Activated CD8-positive, alpha-beta T cell treated with anti-CD3 and anti-CD28 coated beads for 36 hours (primary cell): ENCODE measurements at regions of chr16 and their contacts with region 1.

Region 1: DNA sequence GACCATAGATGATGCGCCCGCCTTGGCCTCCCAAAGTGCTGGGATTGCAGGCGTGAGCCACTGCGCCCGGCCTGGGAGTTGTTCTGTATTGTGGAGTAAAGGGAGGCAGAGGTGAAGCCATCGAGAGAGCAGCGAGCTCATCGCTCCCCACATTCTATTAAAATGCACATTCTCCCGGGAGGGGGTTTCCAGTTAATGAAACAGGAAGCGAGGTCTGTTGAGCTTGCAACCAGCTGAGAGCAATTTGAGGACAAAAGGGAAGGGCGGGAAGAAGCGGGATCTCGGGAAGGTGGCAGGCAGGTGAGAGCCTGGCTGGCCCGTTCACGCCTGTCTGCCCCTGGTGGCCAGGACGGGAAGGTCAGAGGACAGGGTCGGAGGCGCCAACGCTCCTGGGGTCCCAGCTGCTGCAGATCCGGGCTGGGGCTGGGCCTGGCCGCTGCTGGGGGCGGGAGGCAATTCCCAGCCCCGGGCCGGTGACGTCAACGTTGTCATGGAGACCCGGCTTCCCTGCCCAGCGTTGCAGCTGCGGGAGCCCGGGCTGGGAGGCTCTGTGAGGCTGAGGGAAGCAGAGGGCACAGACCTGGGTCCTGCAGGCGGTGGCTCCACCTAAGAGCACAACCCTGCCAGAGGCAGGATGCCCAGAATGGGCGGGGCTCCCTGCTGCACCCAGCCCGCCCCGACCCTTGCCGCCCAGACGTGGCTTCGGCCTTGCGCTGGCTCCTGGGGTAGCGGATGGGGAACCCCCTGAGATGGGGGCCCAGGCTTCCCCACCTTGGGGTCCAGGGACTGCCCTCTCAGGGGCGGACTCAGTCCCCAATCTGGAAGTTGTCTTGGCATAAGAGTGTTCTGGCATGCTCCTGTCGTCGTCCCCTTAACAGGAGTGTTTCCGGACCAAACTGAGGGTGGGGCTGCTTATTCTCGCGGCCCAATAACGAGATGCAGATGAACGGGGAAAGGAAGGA is 48.7 kb upstream of the PLCG2 start:
- DNase-seq: peak; percentile 67
- ATAC-seq: peak; percentile 93
- H3K4me3 Mint-ChIP-seq: peak overlapping the region; percentile 68
- H3K27ac Mint-ChIP-seq: peak overlapping the region; percentile 91
- H3K4me1 Mint-ChIP-seq: peaks cover 12% of the 10 kb centered on the region
- H3K27me3 Mint-ChIP-seq: no peaks in the 10 kb centered on the region
- CTCF ChIP-seq: peak; percentile 69

Region 2: GRCh38 chr16:81366316-81366932 is 363.9 kb before region 1 on chr16:
- CTCF ChIA-PET with region 1: interaction called, 44 read pairs
- POLR2A ChIA-PET with region 1: no interaction called
- intact Hi-C with region 1: loop called (anchors 10 kb)
- DNase-seq: peak; percentile 10
- ATAC-seq: peak; percentile 67
- H3K4me3 Mint-ChIP-seq: no peak overlapping the region
- H3K27ac Mint-ChIP-seq: no peak overlapping the region
- H3K4me1 Mint-ChIP-seq: no peaks in the 10 kb centered on the region
- H3K27me3 Mint-ChIP-seq: no peaks in the 10 kb centered on the region
- CTCF ChIP-seq: peak; percentile 80

Region 3: DNA sequence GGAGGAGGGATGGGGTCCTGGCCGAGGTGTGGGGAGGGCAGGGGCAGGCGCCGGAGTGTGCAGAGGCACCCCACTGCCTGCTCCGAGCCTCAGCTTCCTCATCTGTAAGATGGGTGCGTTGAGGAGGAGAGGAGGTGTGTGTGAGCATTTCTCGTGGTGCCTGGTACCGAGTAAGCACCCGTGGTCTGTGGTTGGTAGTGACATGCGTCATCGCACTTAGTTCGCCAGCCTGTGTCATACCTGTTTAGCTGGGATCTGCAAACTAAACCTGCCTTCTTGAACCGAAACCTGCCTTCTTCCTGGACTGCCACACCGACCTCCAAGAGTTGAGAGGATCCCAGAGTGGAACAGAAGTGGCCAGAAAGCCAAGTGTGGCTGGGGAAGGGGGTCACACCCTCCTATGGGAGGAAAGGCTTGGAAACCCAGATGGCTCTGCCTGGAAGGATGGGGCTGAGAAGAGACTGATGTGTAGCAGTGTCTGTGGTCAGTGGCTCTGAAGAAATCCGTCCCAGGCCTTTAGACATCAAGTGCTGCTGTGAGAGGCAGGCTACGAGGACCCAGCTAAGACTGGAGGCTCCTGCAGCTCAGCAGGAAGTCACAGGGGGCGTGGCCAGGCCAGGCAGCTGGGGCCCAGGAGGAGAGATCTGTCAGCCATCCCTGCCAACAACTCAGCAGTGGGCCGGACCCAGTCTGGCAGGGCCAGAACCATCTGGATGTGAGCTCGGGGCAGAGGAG is 113.9 kb before region 1 on chr16:
- CTCF ChIA-PET with region 1: interaction called, 26 read pairs
- POLR2A ChIA-PET with region 1: no interaction called
- intact Hi-C with region 1: no loop called
- DNase-seq: peak; percentile 91
- ATAC-seq: peak; percentile 95
- H3K4me3 Mint-ChIP-seq: peak overlapping the region; percentile 42
- H3K27ac Mint-ChIP-seq: peak overlapping the region; percentile 90
- H3K4me1 Mint-ChIP-seq: peaks cover 13% of the 10 kb centered on the region
- H3K27me3 Mint-ChIP-seq: no peaks in the 10 kb centered on the region
- CTCF ChIP-seq: no peak

Region 4: DNA sequence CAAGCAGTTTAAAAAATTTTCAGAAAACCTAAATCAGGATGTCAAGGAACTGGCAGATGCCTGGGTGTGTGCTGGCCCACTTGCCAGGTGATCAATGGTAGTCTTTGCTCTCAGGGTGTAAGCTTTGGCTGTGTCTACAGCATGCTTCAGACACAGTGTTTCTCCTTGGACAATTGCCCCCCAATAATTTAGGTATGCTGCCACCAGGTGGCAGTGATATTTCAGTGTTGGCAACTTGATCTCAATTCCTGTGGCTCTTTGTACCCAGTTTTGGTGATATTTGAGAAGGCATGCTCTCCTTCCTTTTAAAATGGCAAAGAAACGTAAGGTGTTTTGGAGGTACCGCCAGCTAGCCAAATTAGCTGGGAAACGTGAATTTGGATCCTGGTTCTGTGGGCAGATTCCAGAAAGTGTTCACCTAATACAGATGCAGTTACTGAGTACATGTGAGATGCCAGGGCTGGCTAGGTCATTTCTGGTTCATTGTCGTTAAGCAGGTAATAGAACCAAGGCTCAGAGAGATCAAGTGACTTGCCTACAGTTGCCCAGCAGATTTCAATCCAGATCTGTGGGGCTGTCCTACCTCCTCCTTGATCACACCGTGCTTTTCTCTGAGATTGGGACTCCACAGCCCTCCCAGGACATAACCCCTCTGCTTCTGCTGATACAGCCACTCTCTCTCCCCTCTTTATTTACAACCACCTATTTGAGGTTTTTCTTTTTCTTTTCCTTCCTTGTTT is 106.8 kb before region 1 on chr16:
- CTCF ChIA-PET with region 1: interaction called, 26 read pairs
- POLR2A ChIA-PET with region 1: no interaction called
- intact Hi-C with region 1: no loop called
- DNase-seq: peak; percentile 74
- ATAC-seq: no peak
- H3K4me3 Mint-ChIP-seq: no peak overlapping the region
- H3K27ac Mint-ChIP-seq: no peak overlapping the region
- H3K4me1 Mint-ChIP-seq: peaks cover 5% of the 10 kb centered on the region
- H3K27me3 Mint-ChIP-seq: no peaks in the 10 kb centered on the region
- CTCF ChIP-seq: peak; percentile 69

Region 5: GRCh38 chr16:81688182-81688581 is 42.2 kb before region 1 on chr16:
- CTCF ChIA-PET with region 1: no interaction called
- POLR2A ChIA-PET with region 1: no interaction called
- intact Hi-C with region 1: no loop called
- DNase-seq: peak; percentile 67
- ATAC-seq: peak; percentile 90
- H3K4me3 Mint-ChIP-seq: no peak overlapping the region
- H3K27ac Mint-ChIP-seq: no peak overlapping the region
- H3K4me1 Mint-ChIP-seq: peaks cover 12% of the 10 kb centered on the region
- H3K27me3 Mint-ChIP-seq: no peaks in the 10 kb centered on the region
- CTCF ChIP-seq: no peak

Region 6: DNA sequence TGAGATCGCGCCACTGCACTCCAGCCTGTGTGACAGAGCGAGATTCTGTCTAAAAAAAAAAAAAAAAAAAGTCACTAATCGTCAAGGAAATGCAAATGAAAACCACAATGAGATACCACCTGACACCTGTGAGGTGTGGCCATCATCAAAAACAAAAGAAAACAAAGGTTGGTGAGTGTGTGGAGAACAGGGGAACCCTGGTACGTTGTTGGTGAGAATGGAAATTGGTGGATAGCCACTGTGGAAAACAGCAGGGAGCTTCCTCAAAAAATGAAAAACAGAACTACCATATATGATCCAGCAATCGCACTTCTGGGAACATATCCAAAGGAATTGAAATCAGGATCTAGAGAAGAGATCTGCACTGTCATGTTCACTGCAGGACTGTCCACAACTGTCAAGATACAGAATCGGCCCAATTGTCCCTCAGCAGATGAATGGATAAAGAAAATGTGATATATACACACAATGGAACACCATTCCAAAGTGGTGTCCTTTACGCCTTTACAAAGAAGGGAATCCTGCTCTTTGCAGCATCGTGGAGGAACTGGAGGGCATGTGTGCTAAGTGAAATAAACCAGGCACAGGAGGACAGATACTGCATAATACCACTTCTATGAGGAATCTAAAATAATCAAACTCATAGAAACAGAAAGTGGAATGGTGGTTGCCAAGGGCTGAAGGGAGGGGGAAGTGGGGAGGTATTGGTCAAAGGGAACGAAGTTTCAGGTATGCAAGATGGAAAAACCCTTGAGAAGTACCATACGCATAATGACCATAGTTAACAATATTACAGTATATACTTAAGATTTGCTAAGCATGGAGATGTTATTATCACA is 14.8 kb before region 1 on chr16:
- CTCF ChIA-PET with region 1: interaction called, 19 read pairs
- POLR2A ChIA-PET with region 1: no interaction called
- intact Hi-C with region 1: no loop called
- DNase-seq: peak; percentile 51
- ATAC-seq: peak; percentile 35
- H3K4me3 Mint-ChIP-seq: peak overlapping the region; percentile 10
- H3K27ac Mint-ChIP-seq: peak overlapping the region; percentile 65
- H3K4me1 Mint-ChIP-seq: peaks cover 43% of the 10 kb centered on the region
- H3K27me3 Mint-ChIP-seq: no peaks in the 10 kb centered on the region
- CTCF ChIP-seq: no peak

Region 7: DNA sequence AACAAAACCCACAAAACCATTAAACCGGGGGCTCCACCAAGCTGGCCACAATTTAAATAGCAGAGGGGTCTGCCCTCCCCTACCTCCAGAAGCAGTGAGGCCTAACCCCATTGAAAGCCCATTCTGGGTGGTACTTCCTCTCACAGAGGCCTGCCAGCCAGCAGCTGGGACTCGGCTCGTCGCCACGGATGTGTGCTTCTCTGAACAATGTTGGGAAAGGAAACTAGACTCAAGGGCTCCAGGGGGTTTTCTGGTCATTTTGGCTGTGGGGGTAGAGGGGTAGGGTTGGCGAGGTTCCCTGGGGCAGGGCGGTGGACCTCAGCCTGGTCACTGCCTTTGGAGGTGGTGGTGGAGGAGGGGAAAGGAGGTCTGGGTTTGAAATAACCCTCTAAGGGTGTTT is 44.0 kb after region 1 on chr16:
- CTCF ChIA-PET with region 1: no interaction called
- POLR2A ChIA-PET with region 1: no interaction called
- intact Hi-C with region 1: no loop called
- DNase-seq: no peak
- ATAC-seq: no peak
- H3K4me3 Mint-ChIP-seq: no peak overlapping the region
- H3K27ac Mint-ChIP-seq: no peak overlapping the region
- H3K4me1 Mint-ChIP-seq: peaks cover 3% of the 10 kb centered on the region
- H3K27me3 Mint-ChIP-seq: peaks cover 12% of the 10 kb centered on the region
- CTCF ChIP-seq: no peak

Region 8: DNA sequence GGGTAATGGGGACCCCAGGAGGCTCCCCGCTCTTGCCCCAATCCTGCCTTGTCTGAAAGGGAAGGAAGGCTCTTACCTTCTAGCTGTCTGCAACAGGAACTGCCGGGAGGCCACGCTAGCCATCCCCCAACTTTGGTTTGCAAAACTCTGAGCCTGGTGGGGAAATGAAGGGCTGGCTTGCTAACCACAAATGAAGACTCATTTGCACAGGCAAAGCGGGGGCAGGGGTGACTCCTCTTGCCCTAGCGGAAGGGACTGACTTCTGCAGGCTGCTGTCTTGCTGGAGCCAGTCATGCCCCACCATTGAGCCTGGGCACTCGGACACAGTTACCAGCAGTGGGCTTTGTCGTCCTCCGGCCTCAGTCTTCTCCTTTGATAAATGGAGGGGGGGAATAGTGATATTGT is 101.4 kb after region 1 on chr16:
- CTCF ChIA-PET with region 1: no interaction called
- POLR2A ChIA-PET with region 1: no interaction called
- intact Hi-C with region 1: no loop called
- DNase-seq: peak; percentile 89
- ATAC-seq: peak; percentile 98
- H3K4me3 Mint-ChIP-seq: no peak overlapping the region
- H3K27ac Mint-ChIP-seq: peak overlapping the region; percentile 37
- H3K4me1 Mint-ChIP-seq: peaks cover 23% of the 10 kb centered on the region
- H3K27me3 Mint-ChIP-seq: no peaks in the 10 kb centered on the region
- CTCF ChIP-seq: peak; percentile 53